ENCODE measurements at regions of chr18 and their contacts with region 1.

Region 1: GRCh38 chr18:33928226-33928625 is 296.5 kb downstream of the NOL4 start:
- DNase-seq: no peak
- H3K4me3 ChIP-seq: no peak overlapping the region
- H3K27ac ChIP-seq: no peak overlapping the region
- H3K4me1 ChIP-seq: no peaks in the 10 kb centered on the region
- H3K27me3 ChIP-seq: no peaks in the 10 kb centered on the region
- CTCF ChIP-seq: no peak
- EP300 ChIP-seq: no peak
- POLR2A ChIP-seq: no peak

Region 2: GRCh38 chr18:32213693-32214092 is 1714.5 kb before region 1 on chr18:
- intact Hi-C with region 1: no loop called
- DNase-seq: no peak
- H3K4me3 ChIP-seq: no peak overlapping the region
- H3K27ac ChIP-seq: no peak overlapping the region
- H3K4me1 ChIP-seq: no peaks in the 10 kb centered on the region
- H3K27me3 ChIP-seq: no peaks in the 10 kb centered on the region
- CTCF ChIP-seq: no peak
- EP300 ChIP-seq: no peak
- POLR2A ChIP-seq: no peak

Region 3: GRCh38 chr18:33916200-33916599 is 12.0 kb before region 1 on chr18:
- intact Hi-C with region 1: loop called in 1 of 4 experiments (anchors 1 kb)
- DNase-seq: no peak
- H3K4me3 ChIP-seq: no peak overlapping the region
- H3K27ac ChIP-seq: no peak overlapping the region
- H3K4me1 ChIP-seq: no peaks in the 10 kb centered on the region
- H3K27me3 ChIP-seq: no peaks in the 10 kb centered on the region
- CTCF ChIP-seq: no peak
- EP300 ChIP-seq: no peak
- POLR2A ChIP-seq: no peak

Measured in ovary (tissue), 10 donors.